Right lobe of liver (tissue), 6 donors: ENCODE measurements at regions of chr1 and their contacts with region 1.

Region 1: DNA sequence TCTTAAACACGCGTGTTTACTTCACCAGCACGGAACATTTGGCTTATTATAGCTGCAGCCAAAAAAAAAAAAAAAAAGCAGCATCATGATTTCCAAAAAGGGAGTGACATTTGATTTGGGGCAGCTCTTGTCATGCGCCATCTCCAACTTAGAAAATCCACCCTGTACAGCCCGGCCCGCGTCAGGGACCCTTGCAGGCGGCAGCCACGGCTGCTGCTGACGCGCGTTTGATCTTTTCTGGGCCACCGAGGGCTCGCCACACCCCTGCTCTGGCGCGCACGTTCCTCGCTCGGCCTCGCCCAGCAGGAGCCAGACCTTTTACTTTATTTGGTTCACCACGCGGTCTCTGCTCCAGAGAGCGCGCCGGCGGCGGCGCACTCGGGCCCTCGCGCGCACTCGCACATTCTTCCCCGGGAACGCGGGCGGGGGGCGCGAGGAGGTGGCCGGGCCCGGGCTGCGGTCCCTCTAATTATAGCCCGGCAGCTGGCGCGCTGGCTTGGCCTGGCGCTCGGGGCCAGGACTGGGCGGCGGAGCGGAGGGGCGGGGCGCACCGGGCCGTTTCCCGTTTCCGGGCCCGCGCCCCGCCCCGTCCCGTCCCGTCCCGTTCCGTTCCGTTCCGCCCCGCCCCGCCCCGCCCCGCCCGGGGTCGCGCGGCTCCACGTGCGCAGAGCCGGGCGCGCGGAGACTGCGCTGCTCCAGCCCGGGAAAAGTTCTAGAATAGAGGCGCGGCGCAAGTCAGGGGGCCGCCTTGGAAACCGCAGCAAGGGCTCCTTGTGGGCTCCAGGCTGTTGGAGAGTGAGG is 10.2 kb downstream of the IRF2BP2 start:
- DNase-seq: peak; percentile 91 to 92 (median 91)
- ATAC-seq: peak; percentile 73 to 89 (median 80)
- H3K4me3 ChIP-seq: peak overlapping the region; percentile 47 to 57 (median 56)
- H3K27ac ChIP-seq: peak overlapping the region; percentile 99 to 100 (median 100)
- H3K4me1 ChIP-seq: peaks cover 4 to 53% (median 28%) of the 10 kb centered on the region in 4 donors
- H3K27me3 ChIP-seq: no peaks in the 10 kb centered on the region
- CTCF ChIP-seq: peak in 1 of 4 donors; percentile 15
- POLR2A ChIP-seq: peak; percentile 95

Region 2: DNA sequence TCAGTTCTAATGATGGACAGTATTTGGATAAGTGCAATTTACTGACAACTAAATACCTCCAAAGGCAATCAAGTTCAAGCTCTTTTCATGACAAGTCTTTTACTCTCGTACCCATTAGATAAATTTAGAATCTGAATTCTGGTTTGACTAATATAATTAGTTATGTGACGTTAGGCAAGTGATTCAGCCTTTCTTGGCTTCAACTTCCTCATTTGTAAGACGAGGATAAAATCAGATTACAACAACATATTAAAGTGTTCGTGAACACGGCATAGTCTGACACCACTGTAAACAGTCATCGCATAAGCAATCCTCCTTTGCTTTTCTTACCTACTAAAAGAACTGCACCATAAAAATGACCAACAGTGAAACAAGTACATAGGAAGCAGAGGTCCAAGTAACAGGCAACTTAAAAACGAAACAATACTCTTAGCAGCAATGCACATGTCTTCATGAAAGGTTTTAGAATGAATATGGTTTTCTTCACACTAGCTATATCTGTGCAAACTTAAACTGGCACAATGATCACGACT is 200.9 kb before region 1 on chr1:
- intact Hi-C with region 1: no loop called
- DNase-seq: no peak
- ATAC-seq: peak in 1 of 4 donors; percentile 21
- H3K4me3 ChIP-seq: no peak overlapping the region
- H3K27ac ChIP-seq: no peak overlapping the region
- H3K4me1 ChIP-seq: peaks cover 0 to 9% (median 2%) of the 10 kb centered on the region in 4 donors
- H3K27me3 ChIP-seq: no peaks in the 10 kb centered on the region
- CTCF ChIP-seq: no peak
- POLR2A ChIP-seq: no peak

Region 3: DNA sequence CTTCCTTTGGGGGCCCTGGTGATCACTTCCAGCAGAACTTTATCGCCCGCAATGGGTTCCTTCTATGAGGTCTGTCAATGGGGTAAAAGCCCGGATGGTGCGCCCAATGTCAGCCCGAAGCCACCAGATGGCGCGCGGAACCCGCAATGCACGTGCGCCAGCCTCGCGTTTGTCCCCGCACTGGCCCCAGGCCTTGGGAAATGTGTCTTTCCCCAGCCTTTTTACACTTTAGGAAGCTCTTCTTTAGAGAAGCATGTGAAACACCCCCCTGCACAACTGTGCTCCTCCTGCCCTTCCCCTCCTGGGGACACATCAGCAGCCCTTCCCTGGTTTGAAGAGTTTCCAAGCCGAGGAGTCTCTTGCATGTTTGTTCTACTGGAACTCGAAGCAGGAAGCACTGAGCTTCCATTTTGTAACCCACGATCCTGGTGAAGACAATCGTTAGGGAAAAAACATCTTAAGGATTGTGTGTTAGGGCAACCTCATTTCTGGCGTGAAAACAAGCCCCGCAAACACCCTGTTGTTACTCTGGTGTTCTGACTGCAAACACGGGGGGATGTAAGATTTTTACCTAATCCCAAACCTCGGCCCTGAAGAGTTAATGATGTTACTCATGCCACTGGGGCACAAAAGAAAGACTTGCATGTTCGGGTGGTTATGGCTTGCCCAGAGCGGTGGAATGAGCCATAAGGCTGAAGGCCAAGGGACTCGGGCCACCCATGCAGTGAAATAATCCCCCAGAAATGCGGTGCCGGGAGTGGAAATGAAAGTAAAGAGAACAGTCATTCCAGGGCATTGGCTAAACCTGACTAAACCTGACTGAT is 100.5 kb before region 1 on chr1:
- intact Hi-C with region 1: loop called (anchors 5 to 10 kb)
- DNase-seq: peak; percentile 92 to 93 (median 92)
- ATAC-seq: peak; percentile 87 to 93 (median 90)
- H3K4me3 ChIP-seq: no peak overlapping the region
- H3K27ac ChIP-seq: peak overlapping the region; percentile 78 to 95 (median 91)
- H3K4me1 ChIP-seq: peaks cover 0 to 43% (median 9%) of the 10 kb centered on the region in 4 donors
- H3K27me3 ChIP-seq: no peaks in the 10 kb centered on the region
- CTCF ChIP-seq: peak; percentile 94 to 98 (median 96)
- POLR2A ChIP-seq: no peak

Region 4: DNA sequence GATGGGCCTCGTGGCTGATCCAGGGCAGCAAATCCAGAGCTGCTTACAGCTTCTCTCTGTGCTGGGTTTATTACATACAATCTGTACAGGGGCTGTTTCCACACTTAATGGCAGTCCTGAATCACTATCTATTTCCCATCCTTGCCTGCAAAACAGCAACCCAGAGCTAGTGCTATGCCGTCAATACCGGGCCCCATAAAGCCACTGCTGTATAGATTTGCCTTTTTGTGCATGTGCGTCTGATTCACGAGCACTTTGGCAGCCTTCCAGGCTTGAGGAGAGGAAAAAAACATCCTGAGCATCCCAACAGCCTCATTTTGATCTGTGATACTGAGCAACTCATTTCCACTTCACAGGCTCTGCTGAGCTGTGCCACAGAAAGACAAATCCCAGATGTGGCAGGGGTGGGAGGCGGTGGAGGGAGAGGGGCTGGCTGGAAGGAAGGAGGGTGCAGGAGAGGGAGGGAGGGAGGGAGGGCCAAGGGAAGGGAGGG is 55.7 kb before region 1 on chr1:
- intact Hi-C with region 1: loop called (anchors 10 kb)
- DNase-seq: peak in 1 of 3 donors; percentile 66
- ATAC-seq: peak; percentile 39 to 66 (median 48)
- H3K4me3 ChIP-seq: no peak overlapping the region
- H3K27ac ChIP-seq: peak overlapping the region; percentile 82 to 94 (median 90)
- H3K4me1 ChIP-seq: peaks cover 0 to 40% (median 16%) of the 10 kb centered on the region in 4 donors
- H3K27me3 ChIP-seq: no peaks in the 10 kb centered on the region
- CTCF ChIP-seq: no peak
- POLR2A ChIP-seq: no peak

Region 5: GRCh38 chr1:234743791-234744611 is 144.2 kb after region 1 on chr1:
- intact Hi-C with region 1: no loop called
- DNase-seq: no peak
- ATAC-seq: peak in 1 of 4 donors; percentile 42
- H3K4me3 ChIP-seq: no peak overlapping the region
- H3K27ac ChIP-seq: no peak overlapping the region
- H3K4me1 ChIP-seq: no peaks in the 10 kb centered on the region
- H3K27me3 ChIP-seq: no peaks in the 10 kb centered on the region
- CTCF ChIP-seq: no peak
- POLR2A ChIP-seq: no peak

Region 6: DNA sequence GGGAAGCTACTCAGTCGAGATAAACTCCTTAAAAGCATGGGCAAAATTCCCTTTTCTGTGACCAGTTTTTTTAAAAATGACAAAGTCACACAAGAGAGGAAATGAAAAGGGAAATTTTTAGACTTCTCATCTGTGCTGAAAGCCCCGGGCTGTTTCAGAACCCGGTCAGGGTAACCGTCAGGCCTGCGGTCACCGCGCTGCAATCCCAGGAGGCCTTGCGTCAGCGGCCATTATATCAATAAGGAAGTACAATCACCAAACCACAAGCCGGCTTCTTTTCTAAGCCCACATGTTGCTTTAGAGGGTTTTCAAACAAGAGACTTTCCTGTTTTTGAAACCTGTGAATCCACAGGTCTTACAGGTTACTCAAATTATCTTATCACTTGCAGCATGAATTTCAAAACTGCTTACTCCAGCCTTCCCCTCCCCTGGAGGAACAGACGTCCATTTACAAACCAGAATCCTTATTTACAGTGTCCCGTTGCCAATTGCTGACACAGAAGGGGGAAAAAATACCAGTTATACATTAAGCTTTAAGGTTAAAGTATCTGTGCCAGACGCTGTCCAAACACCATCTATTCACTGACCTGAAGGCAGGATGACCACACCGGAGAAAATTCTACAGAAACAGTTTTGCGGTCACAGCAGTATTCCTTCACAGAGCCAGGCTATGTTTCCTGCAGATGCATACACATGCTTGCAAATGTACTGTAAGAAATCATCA is 363.5 kb after region 1 on chr1:
- intact Hi-C with region 1: loop called in 1 of 2 experiments (anchors 10 kb)
- DNase-seq: peak; percentile 81 to 88 (median 86)
- ATAC-seq: peak; percentile 5 to 44 (median 24)
- H3K4me3 ChIP-seq: no peak overlapping the region
- H3K27ac ChIP-seq: peak overlapping the region; percentile 88 to 99 (median 95)
- H3K4me1 ChIP-seq: peaks cover 0 to 76% (median 40%) of the 10 kb centered on the region in 4 donors
- H3K27me3 ChIP-seq: no peaks in the 10 kb centered on the region
- CTCF ChIP-seq: no peak
- POLR2A ChIP-seq: peak; percentile 23